Mammary epithelial cell (primary cell): ENCODE measurements at regions of chrX and their contacts with region 1.

Region 1: GRCh38 chrX:106437405-106437804 is 174.4 kb upstream of the RADX start:
- DNase-seq: no peak
- H3K4me3 ChIP-seq: no peak overlapping the region
- H3K27ac ChIP-seq: no peak overlapping the region
- H3K4me1 ChIP-seq: no peaks in the 10 kb centered on the region
- H3K27me3 ChIP-seq: peaks cover 3% of the 10 kb centered on the region
- CTCF ChIP-seq: no peak

Region 2: DNA sequence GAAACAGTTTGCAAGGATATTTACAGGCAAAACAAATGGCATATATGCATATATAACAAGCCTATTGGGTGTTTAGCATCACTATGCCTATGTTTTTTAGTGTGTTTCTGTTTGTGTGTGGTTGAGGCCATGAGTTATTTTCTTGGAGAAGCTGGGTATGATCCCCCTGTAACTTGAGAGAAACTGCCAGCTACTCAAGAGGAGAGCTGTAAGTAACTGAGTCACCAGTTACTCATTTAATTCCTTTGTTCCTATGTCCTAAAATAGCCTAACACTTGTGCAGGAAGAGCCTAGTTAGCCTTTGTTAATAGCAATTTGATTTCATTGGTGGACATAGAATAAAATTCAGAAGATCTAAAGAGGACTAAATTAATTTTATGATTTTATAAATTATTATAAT is 190.2 kb before region 1 on chrX:
- CTCF ChIA-PET with region 1: no interaction called
- dilution Hi-C with region 1: no loop called
- in situ Hi-C with region 1: no loop called
- intact Hi-C with region 1: no loop called
- DNase-seq: peak; percentile 67
- H3K4me3 ChIP-seq: no peak overlapping the region
- H3K27ac ChIP-seq: peak overlapping the region; percentile 84
- H3K4me1 ChIP-seq: peaks cover 15% of the 10 kb centered on the region
- H3K27me3 ChIP-seq: no peaks in the 10 kb centered on the region
- CTCF ChIP-seq: no peak

Region 3: GRCh38 chrX:106391284-106391911 is 46.0 kb before region 1 on chrX:
- CTCF ChIA-PET with region 1: no interaction called
- dilution Hi-C with region 1: loop called (anchors 5 kb)
- in situ Hi-C with region 1: no loop called
- intact Hi-C with region 1: no loop called
- DNase-seq: no peak
- H3K4me3 ChIP-seq: no peak overlapping the region
- H3K27ac ChIP-seq: no peak overlapping the region
- H3K4me1 ChIP-seq: no peaks in the 10 kb centered on the region
- H3K27me3 ChIP-seq: no peaks in the 10 kb centered on the region
- CTCF ChIP-seq: no peak